Calu3 (cell line): ENCODE measurements at regions of chrX and their contacts with region 1.

Region 1: DNA sequence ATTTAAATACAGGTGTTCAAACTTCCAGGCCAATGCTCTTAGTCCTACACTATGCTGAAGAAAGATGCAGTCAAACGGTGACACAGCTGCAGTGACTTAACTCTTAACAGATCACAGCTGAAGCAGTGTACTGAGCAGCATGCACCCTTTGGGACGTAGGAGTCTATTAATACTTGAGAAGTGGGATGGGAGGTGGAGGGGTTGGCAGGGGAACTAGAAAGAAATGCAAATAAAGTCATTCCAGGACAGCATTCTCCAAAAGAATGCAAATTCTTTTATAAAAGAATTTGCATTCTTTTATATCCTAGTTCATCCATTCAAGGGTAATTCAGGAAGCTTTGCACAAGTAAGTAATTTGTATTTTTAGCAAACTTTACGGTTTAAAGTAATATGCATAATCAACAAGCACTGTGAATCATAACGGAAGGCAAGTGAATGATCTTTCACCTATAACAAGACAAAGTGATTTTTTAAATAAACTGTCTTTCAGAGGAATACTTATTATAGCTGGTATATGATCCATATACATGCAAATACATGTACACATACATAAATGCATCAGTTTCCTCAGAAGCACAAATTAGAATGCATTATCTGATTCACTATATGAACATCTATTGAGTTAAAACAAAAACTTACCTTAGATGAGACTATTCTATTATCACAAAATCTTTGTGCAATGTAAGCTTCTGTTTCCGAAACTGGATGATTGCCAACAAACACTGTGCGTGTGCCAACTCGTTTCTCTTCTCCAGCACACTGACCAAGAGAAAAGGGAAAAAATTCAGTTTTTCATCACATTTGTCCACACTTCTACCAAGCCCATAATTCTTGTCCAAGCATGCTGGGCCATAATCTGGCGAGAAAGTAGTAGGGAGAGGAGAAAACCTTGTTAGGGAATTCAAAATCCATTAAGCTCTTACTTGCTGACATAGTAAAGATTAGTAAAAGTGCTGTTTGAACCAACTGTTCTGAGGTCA is 106.5 kb downstream of the ATP11C start:
- DNase-seq: no peak
- H3K4me3 Mint-ChIP-seq: no peak overlapping the region
- H3K27ac Mint-ChIP-seq: no peak overlapping the region
- H3K4me1 Mint-ChIP-seq: peaks cover 22% of the 10 kb centered on the region
- H3K27me3 Mint-ChIP-seq: no peaks in the 10 kb centered on the region
- CTCF ChIP-seq: no peak

Region 2: DNA sequence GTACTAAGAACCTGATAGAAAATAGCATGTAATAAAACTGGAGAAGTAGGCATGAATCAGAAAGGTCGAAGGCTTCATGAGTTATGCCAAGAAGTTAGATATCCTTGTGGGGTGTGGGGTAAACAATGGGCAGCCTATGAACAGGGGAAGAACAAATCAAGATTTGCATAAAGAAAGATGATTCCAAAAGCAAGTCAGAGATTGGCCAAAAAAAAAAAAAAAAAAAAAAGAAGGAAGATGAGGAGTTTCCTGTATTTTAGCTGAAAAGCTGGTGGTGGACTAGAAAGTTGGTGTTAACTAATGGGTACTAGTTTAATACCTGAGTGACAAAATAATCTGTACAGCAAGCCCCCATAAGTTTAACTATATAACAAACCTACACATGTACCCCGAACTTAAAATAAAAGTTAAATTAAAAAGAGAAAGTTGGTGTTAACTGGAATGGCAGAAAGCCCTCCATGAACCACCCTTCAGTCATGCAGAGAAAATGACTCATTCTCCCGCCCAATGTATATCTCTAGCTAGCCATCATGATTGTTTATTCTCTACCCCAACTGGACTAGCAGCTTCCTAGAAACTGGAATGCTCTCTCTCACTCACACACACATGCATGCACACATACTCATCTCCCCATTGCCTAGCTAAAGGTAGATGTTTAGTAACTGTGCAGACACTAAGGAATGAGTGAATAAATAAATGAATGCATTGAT is 64.8 kb after region 1 on chrX:
- CTCF ChIA-PET with region 1: interaction called, 4 read pairs
- intact Hi-C with region 1: loop called (anchors 5 kb)
- DNase-seq: no peak
- H3K4me3 Mint-ChIP-seq: no peak overlapping the region
- H3K27ac Mint-ChIP-seq: peak overlapping the region; percentile 40
- H3K4me1 Mint-ChIP-seq: peaks cover 10% of the 10 kb centered on the region
- H3K27me3 Mint-ChIP-seq: no peaks in the 10 kb centered on the region
- CTCF ChIP-seq: no peak